ENCODE measurements at regions of chr1 and their contacts with region 1.

Region 1: GRCh38 chr1:248825909-248826760 is at the start of gene SH3BP5L:
- DNase-seq: peak; percentile 94
- ATAC-seq: peak; percentile 90
- H3K4me3 Mint-ChIP-seq: peak within 1 kb of the TSS; percentile 84
- H3K27ac Mint-ChIP-seq: peak within 1 kb of the TSS; percentile 98
- H3K4me1 Mint-ChIP-seq: peaks cover 46% of the 10 kb centered on the region
- H3K27me3 Mint-ChIP-seq: peaks cover 2% of the 10 kb centered on the region
- total RNA-seq, gene SH3BP5L: 28.9 to 31.4 TPM

Region 2: GRCh38 chr1:248837794-248838356 is 11.7 kb after region 1 on chr1 and contains the start of gene ZNF672:
- CTCF ChIA-PET with region 1: interaction called, 69 read pairs
- POLR2A ChIA-PET with region 1: interaction called, 52 read pairs
- DNase-seq: peak; percentile 96
- ATAC-seq: peak; percentile 91
- H3K4me3 Mint-ChIP-seq: no peak within 1 kb of the TSS
- H3K27ac Mint-ChIP-seq: peak within 1 kb of the TSS; percentile 94
- H3K4me1 Mint-ChIP-seq: peaks cover 24% of the 10 kb centered on the region
- H3K27me3 Mint-ChIP-seq: peaks cover 2% of the 10 kb centered on the region
- total RNA-seq, gene ZNF672: 48.4 to 54.5 TPM

Region 3: GRCh38 chr1:248873409-248873992 is 47.4 kb after region 1 on chr1:
- CTCF ChIA-PET with region 1: interaction called, 13 read pairs
- POLR2A ChIA-PET with region 1: interaction called, 9 read pairs
- DNase-seq: peak; percentile 94
- ATAC-seq: peak; percentile 86
- H3K4me3 Mint-ChIP-seq: peak overlapping the region; percentile 87
- H3K27ac Mint-ChIP-seq: peak overlapping the region; percentile 90
- H3K4me1 Mint-ChIP-seq: peaks cover 22% of the 10 kb centered on the region
- H3K27me3 Mint-ChIP-seq: peaks cover 10% of the 10 kb centered on the region